Dendritic cell treated with granulocyte-macrophage colony-stimulating factor and Interleukin-4, amounts not matched to agents 40 ng/mL and 50 ng/mL, for 4 days (primary cell): ENCODE measurements at regions of chr6 and their contacts with region 1.

Region 1: GRCh38 chr6:27893059-27893835 is 18.9 kb downstream of the OR2B2 start:
- H3K4me3 Mint-ChIP-seq: no peak overlapping the region
- H3K27ac Mint-ChIP-seq: no peak overlapping the region
- H3K4me1 Mint-ChIP-seq: peaks cover 38% of the 10 kb centered on the region
- H3K27me3 Mint-ChIP-seq: peaks cover 7% of the 10 kb centered on the region

Region 2: DNA sequence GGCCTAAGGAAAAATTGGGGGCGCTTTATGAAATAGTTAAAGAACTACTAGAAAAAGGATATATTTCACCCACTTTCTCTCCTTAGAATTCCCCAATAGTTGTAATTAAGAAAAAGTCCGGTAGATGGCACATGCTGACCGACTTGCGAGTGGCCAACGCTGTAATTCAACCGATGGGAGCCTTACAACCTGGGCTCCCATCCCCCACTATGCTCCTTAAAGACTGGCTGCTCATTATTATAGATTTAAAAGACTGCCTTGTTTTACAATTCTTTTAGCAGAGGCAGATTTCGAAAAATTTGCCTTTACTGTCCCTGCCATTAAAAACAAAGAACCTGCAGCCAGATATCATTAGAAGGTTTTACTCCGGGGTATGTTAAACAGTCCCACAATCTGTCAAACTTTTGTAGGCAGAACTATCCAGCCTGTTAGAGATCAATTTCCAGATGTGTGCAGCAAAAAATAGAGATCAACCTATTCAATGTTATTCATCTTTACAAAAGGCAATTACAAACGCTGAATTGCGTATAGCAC is 704.3 kb before region 1 on chr6:
- intact Hi-C with region 1: loop called (anchors 5 kb)
- H3K4me3 Mint-ChIP-seq: peak overlapping the region; percentile 76
- H3K27ac Mint-ChIP-seq: peak overlapping the region; percentile 27
- H3K4me1 Mint-ChIP-seq: peaks cover 11% of the 10 kb centered on the region
- H3K27me3 Mint-ChIP-seq: peaks cover 16% of the 10 kb centered on the region

Region 3: GRCh38 chr6:27518881-27519795 is 374.1 kb before region 1 on chr6:
- intact Hi-C with region 1: loop called (anchors 5 kb)
- H3K4me3 Mint-ChIP-seq: peak overlapping the region; percentile 82
- H3K27ac Mint-ChIP-seq: peak overlapping the region; percentile 81
- H3K4me1 Mint-ChIP-seq: no peaks in the 10 kb centered on the region
- H3K27me3 Mint-ChIP-seq: peaks cover 33% of the 10 kb centered on the region

Region 4: GRCh38 chr6:27809939-27810767 is 83.1 kb before region 1 on chr6:
- intact Hi-C with region 1: loop called (anchors 2 kb)
- H3K4me3 Mint-ChIP-seq: peak overlapping the region; percentile 81
- H3K27ac Mint-ChIP-seq: peak overlapping the region; percentile 95
- H3K4me1 Mint-ChIP-seq: peaks cover 27% of the 10 kb centered on the region
- H3K27me3 Mint-ChIP-seq: peaks cover 2% of the 10 kb centered on the region

Region 5: GRCh38 chr6:27854421-27854820 is 38.8 kb before region 1 on chr6:
- intact Hi-C with region 1: loop called (anchors 5 kb)
- H3K4me3 Mint-ChIP-seq: no peak overlapping the region
- H3K27ac Mint-ChIP-seq: no peak overlapping the region
- H3K4me1 Mint-ChIP-seq: peaks cover 5% of the 10 kb centered on the region
- H3K27me3 Mint-ChIP-seq: peaks cover 3% of the 10 kb centered on the region

Region 6: GRCh38 chr6:27871924-27872638 is 21.2 kb before region 1 on chr6:
- intact Hi-C with region 1: loop called (anchors 2 kb)
- H3K4me3 Mint-ChIP-seq: peak overlapping the region; percentile 87
- H3K27ac Mint-ChIP-seq: peak overlapping the region; percentile 99
- H3K4me1 Mint-ChIP-seq: peaks cover 28% of the 10 kb centered on the region
- H3K27me3 Mint-ChIP-seq: peaks cover 7% of the 10 kb centered on the region

Region 7: GRCh38 chr6:27966044-27966443 is 72.8 kb after region 1 on chr6:
- intact Hi-C with region 1: no loop called
- H3K4me3 Mint-ChIP-seq: no peak overlapping the region
- H3K27ac Mint-ChIP-seq: no peak overlapping the region
- H3K4me1 Mint-ChIP-seq: no peaks in the 10 kb centered on the region
- H3K27me3 Mint-ChIP-seq: no peaks in the 10 kb centered on the region